B cell (primary cell): ENCODE measurements at regions of chr7 and their contacts with region 1.

Region 1: GRCh38 chr7:140175221-140176121 is 1.3 kb downstream of the KDM7A start:
- DNase-seq: peak; percentile 97
- ATAC-seq: peak; percentile 59
- H3K4me3 ChIP-seq: peak overlapping the region; percentile 69 to 89 (median 79)
- H3K4me3 Mint-ChIP-seq: peak overlapping the region; percentile 88
- H3K27ac ChIP-seq: peak overlapping the region; percentile 75 to 93
- H3K27ac Mint-ChIP-seq: peak overlapping the region; percentile 95
- H3K4me1 ChIP-seq: peaks cover 26 to 39% of the 10 kb centered on the region in 2 donors
- H3K4me1 Mint-ChIP-seq: peaks cover 42% of the 10 kb centered on the region
- H3K27me3 ChIP-seq: no peaks in the 10 kb centered on the region
- H3K27me3 Mint-ChIP-seq: no peaks in the 10 kb centered on the region
- CTCF ChIP-seq: peak; percentile 76

Region 2: DNA sequence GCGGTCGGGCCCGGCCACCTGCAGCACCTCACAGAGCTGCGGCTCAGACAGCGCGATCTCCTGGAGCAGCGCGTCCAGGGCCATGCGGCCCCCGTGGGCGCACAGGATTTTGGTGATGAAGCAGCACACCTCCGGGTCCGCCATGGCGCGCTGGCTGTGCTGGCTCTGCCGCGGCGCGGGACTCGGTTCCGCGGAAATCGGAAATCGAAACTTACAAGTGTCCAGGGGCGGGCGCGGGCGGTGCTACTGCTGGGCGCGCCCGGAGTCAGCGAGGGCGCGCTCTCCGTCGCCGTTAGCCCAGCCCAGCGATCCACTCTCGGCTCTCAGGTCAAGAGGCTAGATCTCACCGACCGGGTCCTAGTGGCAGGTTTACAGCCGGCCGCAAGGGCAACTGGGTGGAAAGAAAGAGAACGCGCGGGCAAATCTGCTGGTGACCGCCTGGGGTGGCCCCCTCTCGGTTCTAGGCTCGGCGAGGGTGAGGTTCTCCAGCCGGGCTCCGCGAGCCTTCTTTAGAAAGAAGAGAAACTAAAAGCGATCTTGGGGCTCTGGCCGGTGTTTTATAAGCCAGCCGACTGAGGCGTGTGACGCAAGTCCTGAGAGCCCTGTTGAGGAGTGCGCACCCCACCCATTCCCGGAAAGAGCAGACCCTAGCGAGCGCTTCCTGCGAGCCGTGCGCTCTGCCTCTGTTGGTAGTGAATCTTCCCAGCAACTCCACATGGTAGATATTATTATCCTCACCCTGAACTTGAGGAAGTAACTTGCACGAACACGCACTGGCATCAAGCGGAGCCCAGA is 1066.1 kb before region 1 on chr7 and contains the start of gene ZC3HAV1:
- CTCF ChIA-PET with region 1: no interaction called
- POLR2A ChIA-PET with region 1: no interaction called
- intact Hi-C with region 1: loop called (anchors 2 kb)
- DNase-seq: peak; percentile 94
- ATAC-seq: peak; percentile 78
- H3K4me3 ChIP-seq: peak within 1 kb of the TSS; percentile 85 to 98 (median 95)
- H3K4me3 Mint-ChIP-seq: peak within 1 kb of the TSS; percentile 88
- H3K27ac ChIP-seq: peak within 1 kb of the TSS; percentile 90 to 96
- H3K27ac Mint-ChIP-seq: peak within 1 kb of the TSS; percentile 99
- H3K4me1 ChIP-seq: peaks cover 18 to 26% of the 10 kb centered on the region in 2 donors
- H3K4me1 Mint-ChIP-seq: peaks cover 34% of the 10 kb centered on the region
- H3K27me3 ChIP-seq: no peaks in the 10 kb centered on the region
- H3K27me3 Mint-ChIP-seq: no peaks in the 10 kb centered on the region
- CTCF ChIP-seq: no peak
- total RNA-seq, gene ZC3HAV1: 101 TPM in 2 replicates

Region 3: DNA sequence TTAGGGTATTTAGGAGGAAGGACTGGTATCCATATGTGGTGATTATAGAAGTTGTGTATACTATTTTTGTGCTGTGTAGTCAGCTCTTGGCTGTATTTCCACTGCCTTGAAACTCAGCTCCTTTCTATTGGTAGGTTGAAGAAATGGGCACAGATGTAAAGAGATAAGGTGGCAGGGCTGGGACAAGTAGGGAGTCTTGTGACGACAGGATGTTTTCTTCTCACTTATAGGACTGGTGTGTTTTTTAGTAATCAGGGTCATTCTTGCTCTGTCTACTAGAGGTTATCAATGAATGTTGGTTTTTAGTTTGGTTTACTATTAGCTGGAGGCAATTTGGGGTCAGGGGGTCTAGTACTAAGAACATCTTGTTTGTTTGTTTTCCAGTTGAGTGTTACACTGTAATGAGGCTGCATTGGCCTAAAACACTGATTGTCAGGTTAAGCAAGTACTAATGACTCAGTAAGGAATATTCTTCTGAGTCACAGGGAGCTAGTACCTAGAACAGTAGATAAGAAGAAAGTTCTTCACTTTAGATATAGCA is 932.7 kb before region 1 on chr7:
- CTCF ChIA-PET with region 1: no interaction called
- POLR2A ChIA-PET with region 1: no interaction called
- intact Hi-C with region 1: no loop called
- DNase-seq: no peak
- ATAC-seq: no peak
- H3K4me3 ChIP-seq: no peak overlapping the region
- H3K4me3 Mint-ChIP-seq: no peak overlapping the region
- H3K27ac ChIP-seq: no peak overlapping the region
- H3K27ac Mint-ChIP-seq: no peak overlapping the region
- H3K4me1 ChIP-seq: no peaks in the 10 kb centered on the region
- H3K4me1 Mint-ChIP-seq: no peaks in the 10 kb centered on the region
- H3K27me3 ChIP-seq: no peaks in the 10 kb centered on the region
- H3K27me3 Mint-ChIP-seq: no peaks in the 10 kb centered on the region
- CTCF ChIP-seq: no peak

Region 4: DNA sequence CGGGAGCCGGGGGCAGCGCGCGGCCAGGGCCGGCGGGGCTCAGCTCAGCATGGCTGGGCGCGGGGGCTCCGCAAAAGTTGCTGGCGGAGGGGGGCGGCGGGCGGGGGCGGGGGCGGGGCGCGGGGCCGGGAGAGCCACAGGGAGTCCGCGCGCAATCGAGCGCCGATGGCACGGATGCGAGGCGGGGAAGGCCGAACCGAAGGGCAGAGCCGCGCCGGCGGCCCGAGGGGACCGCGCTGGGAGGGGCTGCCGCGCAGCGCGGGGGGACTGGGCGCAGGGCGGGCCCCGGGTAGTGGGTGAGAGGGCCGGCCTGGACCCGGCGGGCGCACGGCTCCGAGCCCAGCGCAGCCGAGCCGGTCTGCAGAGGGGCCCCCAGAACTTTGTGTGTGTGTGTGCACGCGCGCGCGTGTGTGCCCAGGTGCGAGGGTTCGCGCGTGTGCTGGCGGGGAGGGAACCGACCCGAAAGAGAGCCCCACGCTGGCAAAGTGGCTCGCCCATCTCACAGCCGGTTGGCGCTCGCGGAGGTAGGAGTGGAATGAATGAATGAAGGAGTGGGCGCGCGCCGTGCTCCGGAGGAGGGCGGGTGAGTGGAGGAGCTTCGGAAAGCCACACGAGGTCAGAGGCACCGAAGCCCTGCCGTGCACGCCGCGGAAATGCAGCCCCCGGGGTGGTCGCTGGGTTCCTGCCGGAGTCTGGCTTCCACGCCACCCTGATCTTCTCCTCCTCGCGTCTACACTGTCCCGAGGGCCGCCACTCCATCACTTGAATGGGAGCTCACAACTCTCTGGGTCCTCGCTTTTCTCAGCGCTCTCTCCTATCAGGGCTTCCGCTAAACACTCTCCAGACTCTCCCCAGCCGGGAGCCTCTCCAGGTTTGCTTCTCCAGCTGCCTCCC is 397.3 kb before region 1 on chr7 and contains the start of gene HIPK2:
- CTCF ChIA-PET with region 1: no interaction called
- POLR2A ChIA-PET with region 1: no interaction called
- intact Hi-C with region 1: loop called (anchors 5 kb)
- DNase-seq: peak; percentile 82
- ATAC-seq: peak; percentile 78
- H3K4me3 ChIP-seq: peak within 1 kb of the TSS; percentile 71 to 97 (median 78)
- H3K4me3 Mint-ChIP-seq: peak within 1 kb of the TSS; percentile 98
- H3K27ac ChIP-seq: peak within 1 kb of the TSS; percentile 66 to 81
- H3K27ac Mint-ChIP-seq: peak within 1 kb of the TSS; percentile 95
- H3K4me1 ChIP-seq: peaks cover 11 to 23% of the 10 kb centered on the region in 2 donors
- H3K4me1 Mint-ChIP-seq: peaks cover 35% of the 10 kb centered on the region
- H3K27me3 ChIP-seq: peaks cover 0 to 5% (median 1%) of the 10 kb centered on the region in 4 experiments
- H3K27me3 Mint-ChIP-seq: peaks cover 16% of the 10 kb centered on the region
- CTCF ChIP-seq: no peak
- total RNA-seq, gene HIPK2: 58.2 and 60.5 TPM in 2 replicates

Region 5: GRCh38 chr7:140209866-140210609 is 34.6 kb after region 1 on chr7:
- CTCF ChIA-PET with region 1: interaction called, 26 read pairs
- POLR2A ChIA-PET with region 1: interaction called, 45 read pairs
- intact Hi-C with region 1: loop called (anchors 1 kb)
- DNase-seq: peak; percentile 92
- ATAC-seq: peak; percentile 94
- H3K4me3 ChIP-seq: peak overlapping the region in 3 of 5 experiments; percentile 4 to 52 (median 36)
- H3K4me3 Mint-ChIP-seq: peak overlapping the region; percentile 85
- H3K27ac ChIP-seq: peak overlapping the region; percentile 86 to 94
- H3K27ac Mint-ChIP-seq: peak overlapping the region; percentile 100
- H3K4me1 ChIP-seq: peaks cover 85 to 88% of the 10 kb centered on the region in 2 donors
- H3K4me1 Mint-ChIP-seq: peaks cover 84% of the 10 kb centered on the region
- H3K27me3 ChIP-seq: no peaks in the 10 kb centered on the region
- H3K27me3 Mint-ChIP-seq: no peaks in the 10 kb centered on the region
- CTCF ChIP-seq: no peak

Region 6: GRCh38 chr7:140326116-140326928 is 150.9 kb after region 1 on chr7:
- CTCF ChIA-PET with region 1: interaction called, 4 read pairs
- POLR2A ChIA-PET with region 1: interaction called, 5 read pairs
- intact Hi-C with region 1: loop called (anchors 1 kb)
- DNase-seq: peak; percentile 51
- ATAC-seq: peak; percentile 61
- H3K4me3 ChIP-seq: no peak overlapping the region
- H3K4me3 Mint-ChIP-seq: no peak overlapping the region
- H3K27ac ChIP-seq: no peak overlapping the region
- H3K27ac Mint-ChIP-seq: no peak overlapping the region
- H3K4me1 ChIP-seq: peaks cover 5% of the 10 kb centered on the region in 2 donors
- H3K4me1 Mint-ChIP-seq: no peaks in the 10 kb centered on the region
- H3K27me3 ChIP-seq: no peaks in the 10 kb centered on the region
- H3K27me3 Mint-ChIP-seq: no peaks in the 10 kb centered on the region
- CTCF ChIP-seq: peak; percentile 54

Region 7: DNA sequence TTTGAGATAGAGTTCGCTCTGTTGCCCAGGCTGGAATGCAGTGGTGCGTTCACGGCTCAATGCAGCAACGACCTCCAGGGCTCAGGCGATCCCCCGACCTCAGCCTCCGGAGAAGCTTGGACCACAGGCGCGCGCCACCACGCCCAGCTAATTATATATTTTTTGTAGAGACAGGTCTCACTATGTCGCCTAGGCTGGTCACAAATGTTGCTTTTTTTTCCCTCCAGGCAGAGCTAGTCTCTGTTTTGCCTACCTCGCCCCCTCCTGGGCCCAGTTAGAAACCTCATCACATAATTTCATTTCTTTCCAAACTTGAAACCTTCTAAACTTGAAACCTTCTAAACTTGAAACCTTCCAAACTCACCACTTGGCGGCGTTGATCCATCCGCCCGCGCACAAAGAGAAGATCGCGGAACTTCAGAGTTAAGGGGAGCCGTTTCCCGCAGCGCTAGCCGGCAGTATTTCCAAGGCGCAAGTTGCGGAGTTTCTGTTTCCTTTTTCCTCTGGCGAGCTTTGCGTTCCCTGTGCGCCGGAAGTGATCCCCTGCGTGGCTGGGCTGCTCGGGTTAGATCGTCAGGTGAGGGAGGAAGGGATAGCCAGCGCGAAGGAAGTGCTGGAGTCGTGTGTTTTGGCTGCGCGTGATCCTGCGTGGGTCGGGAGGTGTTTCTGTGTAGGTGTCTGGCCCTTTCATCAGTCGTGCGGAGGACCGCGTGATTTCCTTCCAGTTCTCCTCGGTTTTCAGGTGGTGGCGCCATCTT is 1562.5 kb after region 1 on chr7 and contains the start of gene SSBP1:
- CTCF ChIA-PET with region 1: no interaction called
- POLR2A ChIA-PET with region 1: no interaction called
- intact Hi-C with region 1: loop called (anchors 5 kb)
- DNase-seq: peak; percentile 97
- ATAC-seq: peak; percentile 86
- H3K4me3 ChIP-seq: peak within 1 kb of the TSS; percentile 66 to 93 (median 90)
- H3K4me3 Mint-ChIP-seq: peak within 1 kb of the TSS; percentile 95
- H3K27ac ChIP-seq: peak within 1 kb of the TSS; percentile 84 to 92
- H3K27ac Mint-ChIP-seq: peak within 1 kb of the TSS; percentile 97
- H3K4me1 ChIP-seq: peaks cover 19 to 20% of the 10 kb centered on the region in 2 donors
- H3K4me1 Mint-ChIP-seq: peaks cover 37% of the 10 kb centered on the region
- H3K27me3 ChIP-seq: no peaks in the 10 kb centered on the region
- H3K27me3 Mint-ChIP-seq: no peaks in the 10 kb centered on the region
- CTCF ChIP-seq: peak; percentile 92
- total RNA-seq, gene SSBP1: 89.1 and 93.6 TPM in 2 replicates